ENCODE measurements at regions of chr22 and their contacts with region 1.

Region 1: GRCh38 chr22:36379593-36380361 is 8.0 kb downstream of the MYH9 start:
- DNase-seq: peak in 7 of 9 experiments; percentile 58 to 81 (median 73)
- ATAC-seq: peak; percentile 33
- H3K4me3 ChIP-seq: peak overlapping the region; percentile 21 to 35
- H3K4me3 Mint-ChIP-seq: peak overlapping the region; percentile 79
- H3K27ac ChIP-seq: peak overlapping the region; percentile 70 to 85
- H3K27ac Mint-ChIP-seq: peak overlapping the region; percentile 99
- H3K4me1 ChIP-seq: peaks cover 89% of the 10 kb centered on the region
- H3K4me1 Mint-ChIP-seq: peaks cover 82% of the 10 kb centered on the region
- H3K27me3 ChIP-seq: no peaks in the 10 kb centered on the region
- H3K27me3 Mint-ChIP-seq: no peaks in the 10 kb centered on the region
- CTCF ChIP-seq: no peak

Region 2: GRCh38 chr22:36339171-36340065 is 40.4 kb before region 1 on chr22:
- CTCF ChIA-PET with region 1: interaction called, 53 read pairs
- POLR2A ChIA-PET with region 1: interaction called, 124 read pairs
- intact Hi-C with region 1: no loop called
- DNase-seq: peak in 2 of 9 experiments; percentile 44 to 50
- ATAC-seq: peak; percentile 12
- H3K4me3 ChIP-seq: no peak overlapping the region
- H3K4me3 Mint-ChIP-seq: peak overlapping the region; percentile 64
- H3K27ac ChIP-seq: peak overlapping the region in 1 of 2 experiments; percentile 55
- H3K27ac Mint-ChIP-seq: peak overlapping the region; percentile 92
- H3K4me1 ChIP-seq: peaks cover 98% of the 10 kb centered on the region
- H3K4me1 Mint-ChIP-seq: peaks cover 92% of the 10 kb centered on the region
- H3K27me3 ChIP-seq: no peaks in the 10 kb centered on the region
- H3K27me3 Mint-ChIP-seq: no peaks in the 10 kb centered on the region
- CTCF ChIP-seq: no peak

Region 3: DNA sequence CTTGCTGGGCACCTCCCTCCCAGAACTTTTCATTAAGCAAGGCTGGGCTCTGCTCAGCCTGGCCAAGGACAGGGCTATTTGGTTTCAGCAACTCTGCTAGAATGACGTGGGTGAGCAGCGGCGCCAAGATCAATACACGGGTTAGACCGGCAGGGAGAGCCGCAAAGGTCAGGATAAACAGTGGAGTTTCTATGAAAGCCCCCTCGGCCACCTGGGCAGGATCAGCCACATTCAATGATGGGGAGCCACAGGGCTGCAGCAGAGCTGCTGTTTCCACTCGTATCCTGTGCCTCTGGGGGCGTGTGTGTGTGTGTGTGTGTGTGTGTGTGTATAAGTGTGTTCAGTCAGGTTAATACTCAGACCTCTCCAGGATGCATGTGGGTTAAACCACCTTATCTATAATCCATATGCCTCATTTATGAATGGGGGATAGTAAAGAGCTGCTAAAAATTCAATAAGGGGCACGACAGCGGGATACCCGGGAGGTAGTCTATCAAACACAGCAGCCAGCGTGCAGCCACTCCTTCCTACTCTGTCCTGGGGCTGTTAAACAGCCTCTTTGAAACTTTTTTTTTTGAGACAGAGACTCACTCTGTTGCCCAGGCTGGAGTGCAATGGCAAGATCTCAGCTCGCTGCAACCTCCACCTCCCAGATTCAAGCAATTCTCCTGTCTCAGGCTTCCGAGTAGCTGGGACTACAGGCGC is 26.8 kb before region 1 on chr22:
- CTCF ChIA-PET with region 1: interaction called, 10 read pairs
- POLR2A ChIA-PET with region 1: interaction called, 32 read pairs
- intact Hi-C with region 1: loop called in 1 of 2 experiments (anchors 2 kb)
- DNase-seq: peak in 5 of 9 experiments; percentile 51 to 81 (median 67)
- ATAC-seq: peak; percentile 32
- H3K4me3 ChIP-seq: peak overlapping the region in 1 of 2 experiments; percentile 36
- H3K4me3 Mint-ChIP-seq: peak overlapping the region; percentile 69
- H3K27ac ChIP-seq: peak overlapping the region; percentile 38 to 74
- H3K27ac Mint-ChIP-seq: peak overlapping the region; percentile 95
- H3K4me1 ChIP-seq: peaks cover 95% of the 10 kb centered on the region
- H3K4me1 Mint-ChIP-seq: peaks cover 95% of the 10 kb centered on the region
- H3K27me3 ChIP-seq: no peaks in the 10 kb centered on the region
- H3K27me3 Mint-ChIP-seq: no peaks in the 10 kb centered on the region
- CTCF ChIP-seq: no peak

Region 4: GRCh38 chr22:36359181-36359996 is 20.4 kb before region 1 on chr22:
- CTCF ChIA-PET with region 1: interaction called, 7 read pairs
- POLR2A ChIA-PET with region 1: interaction called, 57 read pairs
- intact Hi-C with region 1: loop called in 1 of 2 experiments (anchors 2 kb)
- DNase-seq: peak in 2 of 9 experiments; percentile 62 to 75
- ATAC-seq: no peak
- H3K4me3 ChIP-seq: no peak overlapping the region
- H3K4me3 Mint-ChIP-seq: peak overlapping the region; percentile 67
- H3K27ac ChIP-seq: peak overlapping the region in 1 of 2 experiments; percentile 77
- H3K27ac Mint-ChIP-seq: peak overlapping the region; percentile 92
- H3K4me1 ChIP-seq: peaks cover 97% of the 10 kb centered on the region
- H3K4me1 Mint-ChIP-seq: peaks cover 95% of the 10 kb centered on the region
- H3K27me3 ChIP-seq: no peaks in the 10 kb centered on the region
- H3K27me3 Mint-ChIP-seq: no peaks in the 10 kb centered on the region
- CTCF ChIP-seq: no peak

Region 5: GRCh38 chr22:36365020-36365411 is 14.8 kb before region 1 on chr22:
- CTCF ChIA-PET with region 1: interaction called, 21 read pairs
- POLR2A ChIA-PET with region 1: interaction called, 78 read pairs
- intact Hi-C with region 1: loop called in 1 of 2 experiments (anchors 1 kb)
- DNase-seq: peak; percentile 70 to 98 (median 84)
- ATAC-seq: peak; percentile 86
- H3K4me3 ChIP-seq: no peak overlapping the region
- H3K4me3 Mint-ChIP-seq: peak overlapping the region; percentile 68
- H3K27ac ChIP-seq: peak overlapping the region; percentile 57 to 86
- H3K27ac Mint-ChIP-seq: peak overlapping the region; percentile 95
- H3K4me1 ChIP-seq: peaks cover 98% of the 10 kb centered on the region
- H3K4me1 Mint-ChIP-seq: peaks cover 94% of the 10 kb centered on the region
- H3K27me3 ChIP-seq: no peaks in the 10 kb centered on the region
- H3K27me3 Mint-ChIP-seq: no peaks in the 10 kb centered on the region
- CTCF ChIP-seq: no peak

Measured in CD8-positive, alpha-beta T cell (primary cell).